Heart right ventricle (tissue), 16 donors: ENCODE measurements at regions of chr3 and their contacts with region 1.

Region 1: GRCh38 chr3:169227911-169228310 is 435.6 kb downstream of the MECOM start:
- DNase-seq: no peak
- ATAC-seq: peak; percentile 42 to 83 (median 62)
- H3K4me3 ChIP-seq: peak overlapping the region in 4 of 10 donors; percentile 1 to 20 (median 4)
- H3K27ac ChIP-seq: peak overlapping the region in 6 of 10 donors; percentile 30 to 58 (median 47)
- H3K4me1 ChIP-seq: peaks cover 0 to 34% (median 14%) of the 10 kb centered on the region in 9 donors
- H3K27me3 ChIP-seq: no peaks in the 10 kb centered on the region
- CTCF ChIP-seq: no peak

Region 2: DNA sequence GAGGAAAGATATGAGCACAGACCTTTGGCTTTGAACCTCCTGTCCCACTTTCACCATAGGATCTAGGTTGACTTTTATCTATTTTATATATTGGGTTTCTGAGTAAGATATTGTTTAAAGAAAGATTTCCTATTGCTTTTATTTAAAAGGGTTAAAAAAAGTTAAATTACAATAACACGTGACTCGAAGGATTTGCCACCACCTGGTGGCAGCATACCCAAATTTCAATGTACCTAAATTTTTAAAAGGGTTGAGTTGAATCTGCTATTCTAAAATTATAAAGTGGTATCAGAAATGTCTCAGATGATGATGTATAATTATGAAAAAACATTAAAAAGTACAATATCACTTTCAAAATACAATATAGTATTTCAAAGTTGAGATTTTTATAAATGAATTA is 67.2 kb after region 1 on chr3:
- intact Hi-C with region 1: loop called in 1 of 10 experiments (anchors 10 kb)
- DNase-seq: no peak
- ATAC-seq: no peak
- H3K4me3 ChIP-seq: no peak overlapping the region
- H3K27ac ChIP-seq: no peak overlapping the region
- H3K4me1 ChIP-seq: peaks cover 0 to 18% (median 0%) of the 10 kb centered on the region in 9 donors
- H3K27me3 ChIP-seq: no peaks in the 10 kb centered on the region
- CTCF ChIP-seq: peak in 8 of 9 donors; percentile 17 to 52 (median 36)

Region 3: GRCh38 chr3:169390271-169391230 is 162.6 kb after region 1 on chr3:
- intact Hi-C with region 1: loop called in 1 of 10 experiments (anchors 10 kb)
- DNase-seq: no peak
- ATAC-seq: peak in 1 of 8 donors; percentile 43
- H3K4me3 ChIP-seq: no peak overlapping the region
- H3K27ac ChIP-seq: peak overlapping the region in 3 of 10 donors; percentile 11 to 86 (median 59)
- H3K4me1 ChIP-seq: peaks cover 0 to 38% (median 31%) of the 10 kb centered on the region in 9 donors
- H3K27me3 ChIP-seq: no peaks in the 10 kb centered on the region
- CTCF ChIP-seq: peak in 3 of 9 donors; percentile 6 to 20 (median 8)